K562 (cell line): ENCODE measurements at regions of chr20 and their contacts with region 1.

Region 1: DNA sequence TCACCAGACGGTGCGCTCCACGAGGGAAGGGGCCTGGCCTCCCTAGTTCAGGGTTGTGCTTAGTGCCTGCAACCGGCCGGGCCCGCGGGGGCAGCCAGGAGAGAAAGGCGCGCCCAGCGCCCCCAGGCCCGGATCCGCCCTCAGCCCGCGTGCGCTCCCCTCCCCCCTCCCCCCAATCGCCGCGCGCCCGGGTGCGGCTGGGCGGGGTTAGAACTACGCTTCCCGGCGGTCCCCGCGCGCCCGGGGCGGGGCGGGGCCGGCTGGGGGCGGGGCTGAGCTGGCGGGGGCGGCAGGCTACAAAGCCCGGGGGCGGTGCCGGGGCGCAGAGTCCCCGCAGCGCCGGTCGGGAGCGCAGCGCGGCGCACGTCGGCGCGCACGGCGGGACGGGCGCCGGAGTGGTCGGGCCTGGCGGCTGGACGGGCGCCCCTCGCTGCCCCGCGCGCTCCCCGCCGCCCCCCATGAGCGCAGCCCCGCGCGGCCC is at the start of gene RBM38:
- DNase-seq: peak; percentile 89 to 96 (median 92)
- ATAC-seq: peak; percentile 76
- H3K4me3 ChIP-seq: peak within 1 kb of the TSS; percentile 75
- H3K27ac ChIP-seq: peak within 1 kb of the TSS; percentile 95
- H3K4me1 ChIP-seq: peaks cover 34 to 68% of the 10 kb centered on the region in 2 experiments
- H3K27me3 ChIP-seq: no peaks in the 10 kb centered on the region
- CTCF ChIP-seq: no peak
- EP300 ChIP-seq: no peak
- POLR2A ChIP-seq: peak; percentile 76
- RAD21 ChIP-seq: no peak
- polyA plus RNA-seq, gene RBM38: 0.28 to 0.39 TPM

Region 2: DNA sequence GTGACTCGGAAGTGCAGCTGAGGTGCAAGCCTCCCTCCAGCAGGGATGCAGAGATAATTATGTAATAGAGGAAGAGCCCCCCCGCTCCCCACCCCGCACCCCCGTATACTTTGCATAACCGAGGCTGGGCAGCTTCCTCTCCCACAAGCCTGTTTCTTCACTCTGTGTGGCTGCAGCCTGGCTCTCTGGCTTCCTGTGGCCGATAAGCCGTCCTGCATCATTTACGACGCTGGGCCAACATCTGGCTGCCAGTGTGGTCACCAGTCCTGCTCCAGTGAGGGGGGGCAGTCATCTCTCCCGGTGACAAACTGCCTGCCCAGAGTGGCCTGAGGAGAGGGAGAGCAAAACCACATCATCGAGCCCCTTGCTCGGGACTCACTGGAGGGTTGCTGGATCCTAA is 59.3 kb after region 1 on chr20:
- CTCF ChIA-PET with region 1: no interaction called
- POLR2A ChIA-PET with region 1: interaction called, 3 read pairs
- in situ Hi-C with region 1: no loop called
- intact Hi-C with region 1: loop called (anchors 5 kb)
- DNase-seq: peak; percentile 39 to 68 (median 50)
- ATAC-seq: peak; percentile 45
- H3K4me3 ChIP-seq: no peak overlapping the region
- H3K27ac ChIP-seq: peak overlapping the region; percentile 92; the same call in 1 of the 3 replicates
- H3K4me1 ChIP-seq: peaks cover 51 to 55% of the 10 kb centered on the region in 2 experiments
- H3K27me3 ChIP-seq: no peaks in the 10 kb centered on the region
- CTCF ChIP-seq: no peak
- EP300 ChIP-seq: no peak; the same call in 1 of the 2 replicates
- POLR2A ChIP-seq: no peak
- RAD21 ChIP-seq: no peak

Region 3: GRCh38 chr20:57493091-57493615 is 102.0 kb after region 1 on chr20:
- CTCF ChIA-PET with region 1: interaction called, 9 read pairs
- POLR2A ChIA-PET with region 1: interaction called, 8 read pairs
- in situ Hi-C with region 1: loop called (anchors 5 kb)
- intact Hi-C with region 1: no loop called
- DNase-seq: no peak
- ATAC-seq: no peak
- H3K4me3 ChIP-seq: no peak overlapping the region
- H3K27ac ChIP-seq: no peak overlapping the region
- H3K4me1 ChIP-seq: peaks cover 3 to 4% of the 10 kb centered on the region in 2 experiments; a peak in 1 of 5 replicates
- H3K27me3 ChIP-seq: no peaks in the 10 kb centered on the region
- CTCF ChIP-seq: no peak
- EP300 ChIP-seq: no peak
- POLR2A ChIP-seq: no peak
- RAD21 ChIP-seq: no peak

Region 4: DNA sequence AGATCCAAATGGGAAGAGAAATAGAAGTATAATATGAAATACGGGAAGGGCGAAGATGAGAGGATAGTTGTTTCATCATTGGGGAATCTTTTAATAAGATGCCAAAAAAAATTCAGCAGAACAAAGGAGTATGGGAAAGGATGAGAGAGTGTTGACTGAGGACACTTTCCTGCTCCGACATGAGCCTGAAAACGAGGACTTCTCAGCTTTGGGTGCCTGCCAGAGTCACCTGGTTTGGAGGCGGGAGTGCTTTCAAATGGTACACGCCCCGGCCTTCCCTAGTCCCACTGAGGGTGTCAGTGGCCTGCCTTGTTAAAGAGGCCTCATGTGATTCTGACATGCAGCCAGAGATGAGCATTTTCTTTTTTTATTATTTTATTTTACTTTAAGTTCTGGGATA is 586.5 kb after region 1 on chr20:
- CTCF ChIA-PET with region 1: no interaction called
- POLR2A ChIA-PET with region 1: no interaction called
- in situ Hi-C with region 1: no loop called
- intact Hi-C with region 1: no loop called
- DNase-seq: no peak
- ATAC-seq: no peak
- H3K4me3 ChIP-seq: no peak overlapping the region
- H3K27ac ChIP-seq: no peak overlapping the region
- H3K4me1 ChIP-seq: no peaks in the 10 kb centered on the region
- H3K27me3 ChIP-seq: peaks cover 4 to 14% of the 10 kb centered on the region in 2 experiments; a peak in 3 of 5 replicates
- CTCF ChIP-seq: no peak
- EP300 ChIP-seq: no peak
- POLR2A ChIP-seq: no peak
- RAD21 ChIP-seq: no peak